ENCODE measurements at regions of chr12 and their contacts with region 1.

Region 1: GRCh38 chr12:122526683-122527477 is at the starts of genes KNTC1 and RSRC2:
- DNase-seq: peak; percentile 85
- ATAC-seq: peak; percentile 91
- H3K4me3 Mint-ChIP-seq: no peak within 1 kb of the TSS
- H3K27ac Mint-ChIP-seq: no peak within 1 kb of the TSS
- H3K4me1 Mint-ChIP-seq: peaks cover 43% of the 10 kb centered on the region
- H3K27me3 Mint-ChIP-seq: no peaks in the 10 kb centered on the region
- CTCF ChIP-seq: no peak
- total RNA-seq, gene KNTC1: 45.5 and 64.0 TPM in 2 replicates
- total RNA-seq, gene RSRC2: 106 and 126 TPM in 2 replicates

Region 2: GRCh38 chr12:120984351-120984898 is 1542.5 kb before region 1 on chr12:
- CTCF ChIA-PET with region 1: no interaction called
- POLR2A ChIA-PET with region 1: no interaction called
- intact Hi-C with region 1: no loop called
- DNase-seq: no peak
- ATAC-seq: no peak
- H3K4me3 Mint-ChIP-seq: no peak overlapping the region
- H3K27ac Mint-ChIP-seq: no peak overlapping the region
- H3K4me1 Mint-ChIP-seq: no peaks in the 10 kb centered on the region
- H3K27me3 Mint-ChIP-seq: no peaks in the 10 kb centered on the region
- CTCF ChIP-seq: no peak

Region 3: GRCh38 chr12:122225683-122226407 is 301.0 kb before region 1 on chr12 and contains the start of gene DIABLO:
- CTCF ChIA-PET with region 1: no interaction called
- POLR2A ChIA-PET with region 1: interaction called, 5 read pairs
- intact Hi-C with region 1: loop called (anchors 2 kb)
- DNase-seq: peak; percentile 99
- ATAC-seq: peak; percentile 93
- H3K4me3 Mint-ChIP-seq: peak within 1 kb of the TSS; percentile 89
- H3K27ac Mint-ChIP-seq: peak within 1 kb of the TSS; percentile 89
- H3K4me1 Mint-ChIP-seq: peaks cover 26% of the 10 kb centered on the region
- H3K27me3 Mint-ChIP-seq: no peaks in the 10 kb centered on the region
- CTCF ChIP-seq: no peak
- total RNA-seq, gene DIABLO: 39.8 and 51.3 TPM in 2 replicates

Region 4: GRCh38 chr12:122399592-122400373 is 127.1 kb before region 1 on chr12:
- CTCF ChIA-PET with region 1: interaction called, 4 read pairs
- POLR2A ChIA-PET with region 1: interaction called, 12 read pairs
- intact Hi-C with region 1: no loop called
- DNase-seq: peak; percentile 26
- ATAC-seq: peak; percentile 51
- H3K4me3 Mint-ChIP-seq: peak overlapping the region; percentile 44
- H3K27ac Mint-ChIP-seq: peak overlapping the region; percentile 75
- H3K4me1 Mint-ChIP-seq: peaks cover 38% of the 10 kb centered on the region
- H3K27me3 Mint-ChIP-seq: no peaks in the 10 kb centered on the region
- CTCF ChIP-seq: peak; percentile 47

Region 5: GRCh38 chr12:122558745-122559641 is 32.1 kb after region 1 on chr12:
- CTCF ChIA-PET with region 1: no interaction called
- POLR2A ChIA-PET with region 1: interaction called, 18 read pairs
- intact Hi-C with region 1: no loop called
- DNase-seq: no peak
- ATAC-seq: peak; percentile 70
- H3K4me3 Mint-ChIP-seq: peak overlapping the region; percentile 61
- H3K27ac Mint-ChIP-seq: peak overlapping the region; percentile 84
- H3K4me1 Mint-ChIP-seq: peaks cover 19% of the 10 kb centered on the region
- H3K27me3 Mint-ChIP-seq: no peaks in the 10 kb centered on the region
- CTCF ChIP-seq: no peak

Region 6: DNA sequence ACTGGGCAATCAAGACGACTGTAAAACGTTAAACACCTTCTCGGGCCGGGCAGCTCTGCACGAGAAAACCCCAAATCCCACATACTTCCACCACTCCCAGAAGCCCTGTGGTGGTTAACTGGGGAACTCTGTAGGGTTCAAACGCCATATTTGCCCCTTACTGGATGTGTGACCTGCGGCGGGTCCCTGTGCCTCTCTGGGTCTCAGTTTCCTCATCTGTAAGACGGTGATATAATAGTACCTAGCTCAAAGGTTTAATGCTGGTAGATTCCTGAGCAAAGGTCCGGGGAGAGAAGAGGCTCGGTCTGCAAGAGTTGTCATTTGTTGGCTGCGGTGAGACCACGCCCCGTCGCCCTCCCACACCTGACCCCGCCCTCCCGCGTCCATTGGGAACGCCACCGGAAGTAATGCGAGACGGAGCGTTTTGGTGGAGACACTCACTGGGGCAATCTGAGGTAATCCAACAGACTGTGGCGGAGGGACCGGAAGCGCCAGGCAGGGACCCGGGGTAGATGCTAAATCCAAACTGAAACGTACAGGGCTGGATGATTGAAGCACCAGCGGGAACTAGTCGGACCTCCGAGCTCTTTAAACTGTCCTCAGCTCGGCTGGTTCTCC is 447.5 kb after region 1 on chr12:
- CTCF ChIA-PET with region 1: no interaction called
- POLR2A ChIA-PET with region 1: interaction called, 3 read pairs
- intact Hi-C with region 1: loop called (anchors 1 kb)
- DNase-seq: peak; percentile 96
- ATAC-seq: peak; percentile 87
- H3K4me3 Mint-ChIP-seq: peak overlapping the region; percentile 98
- H3K27ac Mint-ChIP-seq: peak overlapping the region; percentile 99
- H3K4me1 Mint-ChIP-seq: peaks cover 28% of the 10 kb centered on the region
- H3K27me3 Mint-ChIP-seq: no peaks in the 10 kb centered on the region
- CTCF ChIP-seq: no peak

Measured in activated B cell treated with CpG ODN at 0.5 μM for 24 hours (primary cell).